Activated CD4-positive, alpha-beta T cell treated with anti-CD3 and anti-CD28 coated beads, Interleukin-2, amount 10 ng/mL, durations not matched to agents 24 days and 14 days (primary cell): ENCODE measurements at regions of chr7 and their contacts with region 1.

Region 1: DNA sequence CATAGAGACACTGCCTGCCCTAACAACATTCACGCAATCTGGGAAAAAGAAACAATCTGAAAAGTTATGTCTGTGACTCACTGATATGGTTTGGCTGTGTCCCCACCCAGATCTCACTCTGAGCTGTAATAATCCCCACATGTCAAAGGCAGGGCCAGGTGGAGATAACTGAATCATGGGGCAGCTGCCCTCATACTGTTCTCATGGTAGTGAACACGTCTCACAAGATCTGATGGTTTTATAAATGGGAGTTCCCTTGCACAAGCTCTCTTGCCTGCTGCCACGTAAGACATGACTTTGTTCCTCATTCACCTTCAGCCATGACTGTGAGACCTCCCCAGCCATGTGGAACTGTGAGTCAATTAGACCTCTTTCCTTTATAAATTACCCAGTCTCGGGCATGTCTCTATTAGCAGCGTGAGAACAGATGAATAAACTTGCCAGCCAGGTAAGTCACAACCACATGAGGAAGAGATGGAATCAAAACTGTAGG is 341.5 kb upstream of the AOAH start:
- DNase-seq: no peak
- H3K4me3 Mint-ChIP-seq: peak overlapping the region; percentile 8
- H3K27ac Mint-ChIP-seq: peak overlapping the region; percentile 90
- H3K4me1 Mint-ChIP-seq: peaks cover 42% of the 10 kb centered on the region
- H3K27me3 Mint-ChIP-seq: no peaks in the 10 kb centered on the region

Region 2: GRCh38 chr7:36852017-36852416 is 213.8 kb before region 1 on chr7:
- intact Hi-C with region 1: loop called (anchors 1 kb)
- DNase-seq: no peak
- H3K4me3 Mint-ChIP-seq: peak overlapping the region; percentile 36
- H3K27ac Mint-ChIP-seq: peak overlapping the region; percentile 79
- H3K4me1 Mint-ChIP-seq: peaks cover 24% of the 10 kb centered on the region
- H3K27me3 Mint-ChIP-seq: no peaks in the 10 kb centered on the region

Region 3: GRCh38 chr7:37031571-37032257 is 34.1 kb before region 1 on chr7:
- intact Hi-C with region 1: loop called (anchors 1 kb)
- DNase-seq: peak; percentile 72
- H3K4me3 Mint-ChIP-seq: no peak overlapping the region
- H3K27ac Mint-ChIP-seq: peak overlapping the region; percentile 77
- H3K4me1 Mint-ChIP-seq: peaks cover 49% of the 10 kb centered on the region
- H3K27me3 Mint-ChIP-seq: no peaks in the 10 kb centered on the region

Region 4: DNA sequence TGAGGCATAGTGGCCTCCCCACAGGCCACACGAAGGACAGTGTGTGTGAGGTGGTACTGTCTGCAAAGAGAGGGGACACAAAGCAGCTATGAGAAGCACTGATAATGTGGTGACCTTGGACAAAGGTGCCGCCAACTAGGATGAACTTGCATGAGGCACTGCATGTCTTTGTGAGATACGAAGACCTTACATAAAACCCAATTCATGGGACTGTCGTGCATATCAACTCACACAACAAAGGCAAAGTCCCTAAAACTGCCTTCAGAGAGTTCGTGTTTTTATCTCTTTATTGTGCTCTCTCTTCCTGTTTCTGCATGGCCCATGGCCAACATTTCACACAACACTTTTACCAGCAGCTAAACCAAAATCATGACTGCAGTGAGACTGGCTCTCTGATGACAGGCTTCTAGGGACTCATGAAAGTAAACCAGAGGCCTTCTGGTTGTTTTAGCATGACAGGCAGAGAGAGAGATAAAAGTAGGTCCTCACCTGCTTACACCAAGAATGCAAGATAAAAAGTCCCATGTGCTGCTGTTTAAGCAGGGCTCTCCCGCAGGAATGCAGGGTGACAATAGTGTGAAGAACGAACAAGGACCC is 35.0 kb after region 1 on chr7:
- intact Hi-C with region 1: no loop called
- DNase-seq: no peak
- H3K4me3 Mint-ChIP-seq: no peak overlapping the region
- H3K27ac Mint-ChIP-seq: no peak overlapping the region
- H3K4me1 Mint-ChIP-seq: peaks cover 23% of the 10 kb centered on the region
- H3K27me3 Mint-ChIP-seq: no peaks in the 10 kb centered on the region

Region 5: DNA sequence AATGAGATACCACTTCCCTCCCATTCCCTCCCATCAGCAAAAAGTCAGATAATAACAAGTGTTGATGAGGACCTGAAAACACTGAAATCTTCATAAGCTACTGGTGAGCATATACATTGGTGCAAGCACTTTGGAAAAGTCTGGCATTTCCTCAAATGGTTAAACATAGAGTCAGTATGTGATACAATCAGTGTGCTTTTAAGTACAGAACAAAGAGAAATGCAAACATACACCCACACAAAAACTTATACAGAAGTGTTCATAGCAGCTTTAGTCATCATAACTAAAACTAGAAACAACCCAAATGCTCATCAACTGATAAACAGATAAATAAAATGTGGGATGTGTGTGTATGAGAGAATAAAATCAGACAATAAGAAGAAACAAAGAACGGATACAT is 120.9 kb after region 1 on chr7:
- intact Hi-C with region 1: loop called (anchors 2 kb)
- DNase-seq: peak; percentile 45
- H3K4me3 Mint-ChIP-seq: no peak overlapping the region
- H3K27ac Mint-ChIP-seq: peak overlapping the region; percentile 8
- H3K4me1 Mint-ChIP-seq: peaks cover 9% of the 10 kb centered on the region
- H3K27me3 Mint-ChIP-seq: no peaks in the 10 kb centered on the region

Region 6: GRCh38 chr7:37359662-37360444 is 294.0 kb after region 1 on chr7:
- intact Hi-C with region 1: loop called (anchors 10 kb)
- DNase-seq: no peak
- H3K4me3 Mint-ChIP-seq: peak overlapping the region; percentile 58
- H3K27ac Mint-ChIP-seq: peak overlapping the region; percentile 77
- H3K4me1 Mint-ChIP-seq: peaks cover 51% of the 10 kb centered on the region
- H3K27me3 Mint-ChIP-seq: no peaks in the 10 kb centered on the region